ENCODE measurements at regions of chr11 and their contacts with region 1.

Region 1: GRCh38 chr11:77994412-77995362 is at the start of gene INTS4:
- DNase-seq: peak; percentile 97 to 99 (median 99)
- H3K4me3 ChIP-seq: peak within 1 kb of the TSS; percentile 69 to 99
- H3K4me3 Mint-ChIP-seq: peak within 1 kb of the TSS; percentile 92 to 98 (median 96)
- H3K27ac ChIP-seq: peak within 1 kb of the TSS; percentile 76
- H3K27ac Mint-ChIP-seq: peak within 1 kb of the TSS; percentile 96 to 99 (median 98)
- H3K4me1 ChIP-seq: peaks cover 25% of the 10 kb centered on the region
- H3K4me1 Mint-ChIP-seq: peaks cover 15 to 41% (median 26%) of the 10 kb centered on the region in 4 donors
- H3K27me3 ChIP-seq: no peaks in the 10 kb centered on the region
- H3K27me3 Mint-ChIP-seq: no peaks in the 10 kb centered on the region
- total RNA-seq, gene INTS4: 84.0 to 85.0 TPM

Region 2: GRCh38 chr11:77637345-77638165 is 357.1 kb before region 1 on chr11 and contains the start of gene CLNS1A:
- CTCF ChIA-PET with region 1: interaction called, 3 read pairs
- POLR2A ChIA-PET with region 1: interaction called, 6 read pairs
- intact Hi-C with region 1: loop called (anchors 10 kb)
- DNase-seq: peak; percentile 72 to 81 (median 78)
- H3K4me3 ChIP-seq: peak within 1 kb of the TSS; percentile 52 to 64
- H3K4me3 Mint-ChIP-seq: peak within 1 kb of the TSS; percentile 95 to 99 (median 97)
- H3K27ac ChIP-seq: peak within 1 kb of the TSS; percentile 68
- H3K27ac Mint-ChIP-seq: peak within 1 kb of the TSS; percentile 89 to 97 (median 93)
- H3K4me1 ChIP-seq: peaks cover 30% of the 10 kb centered on the region
- H3K4me1 Mint-ChIP-seq: peaks cover 28 to 48% (median 40%) of the 10 kb centered on the region in 4 donors
- H3K27me3 ChIP-seq: no peaks in the 10 kb centered on the region
- H3K27me3 Mint-ChIP-seq: peaks cover 1 to 5% of the 10 kb centered on the region in 2 donors
- total RNA-seq, gene CLNS1A: 116 to 118 TPM

Region 3: GRCh38 chr11:78045851-78046485 is 51.3 kb after region 1 on chr11:
- CTCF ChIA-PET with region 1: interaction called, 15 read pairs
- POLR2A ChIA-PET with region 1: interaction called, 3 read pairs
- intact Hi-C with region 1: loop called (anchors 1 kb)
- DNase-seq: peak; percentile 66 to 82 (median 76)
- H3K4me3 ChIP-seq: no peak overlapping the region
- H3K4me3 Mint-ChIP-seq: peak overlapping the region; percentile 47 to 82 (median 64)
- H3K27ac ChIP-seq: no peak overlapping the region
- H3K27ac Mint-ChIP-seq: peak overlapping the region in 3 of 7 donors; percentile 42 to 80 (median 51)
- H3K4me1 ChIP-seq: peaks cover 5% of the 10 kb centered on the region
- H3K4me1 Mint-ChIP-seq: peaks cover 6 to 13% (median 9%) of the 10 kb centered on the region in 4 donors
- H3K27me3 ChIP-seq: no peaks in the 10 kb centered on the region
- H3K27me3 Mint-ChIP-seq: no peaks in the 10 kb centered on the region

Region 4: DNA sequence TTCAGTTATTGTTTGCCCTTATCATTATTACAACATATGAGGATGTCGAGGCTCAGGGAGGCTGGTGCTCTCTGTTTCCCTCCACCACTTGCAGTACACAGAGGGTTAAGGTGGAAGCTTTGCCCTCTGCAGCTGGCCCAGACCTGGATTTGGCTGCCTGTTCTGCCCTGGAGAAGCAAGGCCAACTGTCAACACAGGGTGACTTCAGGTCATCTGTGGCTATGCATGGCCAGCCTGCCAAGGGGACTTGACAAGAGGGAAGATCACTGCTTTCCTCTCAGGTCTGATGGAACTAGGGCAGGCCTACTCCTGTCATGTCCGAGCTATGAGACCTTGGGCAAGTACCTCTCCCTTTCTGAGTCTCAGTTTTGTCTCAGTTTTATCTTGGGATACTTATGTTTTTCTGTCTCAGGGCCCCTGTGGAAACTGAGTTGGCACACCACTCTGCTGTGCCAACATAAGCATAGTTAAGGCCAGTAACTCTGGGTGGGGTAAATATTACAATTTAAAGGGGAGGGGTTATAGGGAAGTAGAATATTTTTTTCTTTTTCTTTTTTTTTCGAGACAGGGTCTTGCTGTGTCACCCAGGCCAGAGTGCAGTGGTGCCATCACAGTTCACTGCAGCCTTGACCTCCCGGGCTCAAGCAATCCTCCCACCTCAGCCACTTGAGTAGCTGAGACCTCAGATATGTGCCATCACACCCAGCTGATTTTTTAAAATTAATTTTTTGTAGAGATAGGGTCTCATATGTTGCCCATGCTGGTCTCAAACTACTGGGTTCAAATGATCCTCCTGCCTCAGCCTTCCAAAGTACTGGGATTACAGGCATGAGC is 66.6 kb after region 1 on chr11:
- CTCF ChIA-PET with region 1: no interaction called
- POLR2A ChIA-PET with region 1: no interaction called
- intact Hi-C with region 1: no loop called
- DNase-seq: no peak
- H3K4me3 ChIP-seq: no peak overlapping the region
- H3K4me3 Mint-ChIP-seq: no peak overlapping the region
- H3K27ac ChIP-seq: no peak overlapping the region
- H3K27ac Mint-ChIP-seq: no peak overlapping the region
- H3K4me1 ChIP-seq: no peaks in the 10 kb centered on the region
- H3K4me1 Mint-ChIP-seq: peaks cover 0 to 1% (median 0%) of the 10 kb centered on the region in 4 donors
- H3K27me3 ChIP-seq: no peaks in the 10 kb centered on the region
- H3K27me3 Mint-ChIP-seq: no peaks in the 10 kb centered on the region

Region 5: DNA sequence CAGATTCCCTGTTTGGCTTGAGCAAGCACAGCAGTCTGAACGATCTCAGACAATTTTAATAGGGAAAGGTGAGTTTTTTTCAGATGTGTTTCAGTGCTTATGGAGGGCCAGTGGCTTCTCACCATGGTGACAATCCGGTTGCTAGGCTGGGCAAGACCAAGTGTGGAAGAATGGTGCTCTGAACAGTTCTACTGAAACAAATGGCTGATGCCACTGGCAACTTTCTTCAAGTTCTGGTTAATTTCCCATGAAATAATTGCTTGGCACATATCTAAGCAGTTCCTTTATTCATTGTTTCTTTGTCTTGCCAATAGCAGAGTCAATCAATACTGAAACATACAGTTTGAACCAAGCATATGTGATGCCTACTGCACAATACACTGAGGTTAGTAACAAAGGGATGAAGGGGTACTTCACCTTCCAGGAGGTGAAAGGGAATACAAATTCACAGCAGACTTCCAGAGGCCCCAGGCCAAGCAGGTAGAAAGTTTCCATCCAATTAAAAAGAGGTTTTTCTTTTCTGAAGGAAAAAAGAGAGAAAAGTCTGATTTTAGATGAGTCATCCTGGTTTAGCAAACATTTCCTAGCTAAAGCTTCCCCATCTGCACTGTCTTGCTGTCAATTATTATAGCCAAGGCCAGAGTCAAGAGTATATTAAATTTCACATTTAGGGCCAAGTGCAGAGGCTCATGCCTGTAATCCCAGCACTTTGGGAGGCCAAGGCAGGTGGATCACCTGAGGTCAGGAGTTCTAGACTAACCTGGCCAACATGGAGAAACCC is 106.2 kb after region 1 on chr11:
- CTCF ChIA-PET with region 1: no interaction called
- POLR2A ChIA-PET with region 1: no interaction called
- intact Hi-C with region 1: no loop called
- DNase-seq: no peak
- H3K4me3 ChIP-seq: no peak overlapping the region
- H3K4me3 Mint-ChIP-seq: no peak overlapping the region
- H3K27ac ChIP-seq: no peak overlapping the region
- H3K27ac Mint-ChIP-seq: no peak overlapping the region
- H3K4me1 ChIP-seq: no peaks in the 10 kb centered on the region
- H3K4me1 Mint-ChIP-seq: no peaks in the 10 kb centered on the region
- H3K27me3 ChIP-seq: no peaks in the 10 kb centered on the region
- H3K27me3 Mint-ChIP-seq: no peaks in the 10 kb centered on the region

Region 6: GRCh38 chr11:78139422-78140391 is 145.0 kb after region 1 on chr11 and contains the start of gene ALG8:
- CTCF ChIA-PET with region 1: interaction called, 5 read pairs
- POLR2A ChIA-PET with region 1: interaction called, 25 read pairs
- intact Hi-C with region 1: loop called (anchors 1 kb)
- DNase-seq: peak; percentile 95 to 96 (median 96)
- H3K4me3 ChIP-seq: peak within 1 kb of the TSS; percentile 87 to 88
- H3K4me3 Mint-ChIP-seq: peak within 1 kb of the TSS; percentile 91 to 99 (median 95)
- H3K27ac ChIP-seq: peak within 1 kb of the TSS; percentile 74
- H3K27ac Mint-ChIP-seq: peak within 1 kb of the TSS; percentile 91 to 98 (median 95)
- H3K4me1 ChIP-seq: peaks cover 21% of the 10 kb centered on the region
- H3K4me1 Mint-ChIP-seq: peaks cover 24 to 37% (median 30%) of the 10 kb centered on the region in 4 donors
- H3K27me3 ChIP-seq: no peaks in the 10 kb centered on the region
- H3K27me3 Mint-ChIP-seq: no peaks in the 10 kb centered on the region
- total RNA-seq, gene ALG8: 27.6 to 31.2 TPM

Region 7: GRCh38 chr11:78416305-78417178 is 421.9 kb after region 1 on chr11:
- CTCF ChIA-PET with region 1: no interaction called
- POLR2A ChIA-PET with region 1: interaction called, 4 read pairs
- intact Hi-C with region 1: loop called (anchors 2 kb)
- DNase-seq: peak; percentile 62 to 85 (median 68)
- H3K4me3 ChIP-seq: peak overlapping the region; percentile 34 to 50
- H3K4me3 Mint-ChIP-seq: peak overlapping the region; percentile 85 to 93 (median 90)
- H3K27ac ChIP-seq: peak overlapping the region; percentile 29
- H3K27ac Mint-ChIP-seq: peak overlapping the region; percentile 82 to 92 (median 89)
- H3K4me1 ChIP-seq: peaks cover 23% of the 10 kb centered on the region
- H3K4me1 Mint-ChIP-seq: peaks cover 15 to 34% (median 22%) of the 10 kb centered on the region in 4 donors
- H3K27me3 ChIP-seq: no peaks in the 10 kb centered on the region
- H3K27me3 Mint-ChIP-seq: peaks cover 5% of the 10 kb centered on the region in 2 donors